ENCODE measurements at regions of chr9 and their contacts with region 1.

Region 1: DNA sequence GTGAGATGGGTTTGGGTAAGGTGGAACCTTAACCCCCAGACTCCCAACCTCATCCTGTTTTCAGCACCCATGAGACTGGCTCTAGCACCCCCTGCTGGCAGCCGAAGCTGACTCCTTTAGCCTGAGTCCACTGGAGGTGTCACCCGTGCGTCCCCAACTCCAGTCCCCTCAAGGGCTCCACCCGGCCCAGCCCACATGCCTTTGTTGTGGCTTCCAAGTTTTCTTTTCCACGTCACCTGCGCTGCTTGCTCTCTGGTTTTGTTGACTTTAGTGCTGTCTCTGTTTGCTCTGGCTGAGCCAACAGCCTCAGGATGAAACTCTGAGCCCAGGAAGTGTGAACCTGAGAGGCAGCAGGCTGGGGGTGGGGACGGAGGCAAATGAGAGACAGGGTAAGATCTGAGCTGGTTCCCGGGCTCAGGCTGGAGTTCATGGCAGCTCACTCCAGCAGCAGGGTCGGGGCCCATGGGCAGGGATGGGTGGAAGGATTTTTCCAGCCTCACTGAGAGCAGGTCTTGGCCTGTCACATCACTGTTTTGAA is 13.2 kb upstream of the AQP7 start:
- DNase-seq: peak; percentile 89 to 98
- ATAC-seq: peak; percentile 91 to 92
- H3K4me3 ChIP-seq: no peak overlapping the region
- H3K27ac ChIP-seq: peak overlapping the region; percentile 77 to 87
- H3K4me1 ChIP-seq: peaks cover 46% of the 10 kb centered on the region
- CTCF ChIP-seq: peak; percentile 91
- EP300 ChIP-seq: peak; percentile 83 to 91; a peak in 4 of 5 replicates
- POLR2A ChIP-seq: no peak
- RAD21 ChIP-seq: peak; percentile 66 to 83

Region 2: GRCh38 chr9:33404788-33405362 is 10.7 kb before region 1 on chr9:
- CTCF ChIA-PET with region 1: interaction called, 87 read pairs
- POLR2A ChIA-PET with region 1: interaction called, 3 read pairs
- DNase-seq: no peak
- ATAC-seq: peak; percentile 42 to 67; a peak in 3 of 6 replicates
- H3K4me3 ChIP-seq: no peak overlapping the region
- H3K27ac ChIP-seq: peak overlapping the region; percentile 27 to 49; a peak in 4 of 6 replicates
- H3K4me1 ChIP-seq: peaks cover 30% of the 10 kb centered on the region
- CTCF ChIP-seq: no peak
- EP300 ChIP-seq: no peak
- POLR2A ChIP-seq: no peak
- RAD21 ChIP-seq: no peak

Region 3: GRCh38 chr9:33436440-33436839 is 20.9 kb after region 1 on chr9:
- CTCF ChIA-PET with region 1: interaction called, 38 read pairs
- POLR2A ChIA-PET with region 1: no interaction called
- DNase-seq: no peak
- ATAC-seq: no peak; a peak in 2 of 6 replicates
- H3K4me3 ChIP-seq: no peak overlapping the region
- H3K27ac ChIP-seq: peak overlapping the region; percentile 2 to 12; a peak in 4 of 6 replicates
- H3K4me1 ChIP-seq: peaks cover 40% of the 10 kb centered on the region
- CTCF ChIP-seq: no peak
- EP300 ChIP-seq: no peak
- POLR2A ChIP-seq: no peak
- RAD21 ChIP-seq: no peak

Region 4: GRCh38 chr9:33452828-33453271 is 37.3 kb after region 1 on chr9:
- CTCF ChIA-PET with region 1: interaction called, 177 read pairs
- POLR2A ChIA-PET with region 1: no interaction called
- DNase-seq: peak; percentile 80 to 88
- ATAC-seq: peak; percentile 88 to 92
- H3K4me3 ChIP-seq: no peak overlapping the region
- H3K27ac ChIP-seq: peak overlapping the region; percentile 60 to 83
- H3K4me1 ChIP-seq: peaks cover 23% of the 10 kb centered on the region
- CTCF ChIP-seq: peak; percentile 87
- EP300 ChIP-seq: no peak
- POLR2A ChIP-seq: no peak
- RAD21 ChIP-seq: peak; percentile 79 to 82

Region 5: DNA sequence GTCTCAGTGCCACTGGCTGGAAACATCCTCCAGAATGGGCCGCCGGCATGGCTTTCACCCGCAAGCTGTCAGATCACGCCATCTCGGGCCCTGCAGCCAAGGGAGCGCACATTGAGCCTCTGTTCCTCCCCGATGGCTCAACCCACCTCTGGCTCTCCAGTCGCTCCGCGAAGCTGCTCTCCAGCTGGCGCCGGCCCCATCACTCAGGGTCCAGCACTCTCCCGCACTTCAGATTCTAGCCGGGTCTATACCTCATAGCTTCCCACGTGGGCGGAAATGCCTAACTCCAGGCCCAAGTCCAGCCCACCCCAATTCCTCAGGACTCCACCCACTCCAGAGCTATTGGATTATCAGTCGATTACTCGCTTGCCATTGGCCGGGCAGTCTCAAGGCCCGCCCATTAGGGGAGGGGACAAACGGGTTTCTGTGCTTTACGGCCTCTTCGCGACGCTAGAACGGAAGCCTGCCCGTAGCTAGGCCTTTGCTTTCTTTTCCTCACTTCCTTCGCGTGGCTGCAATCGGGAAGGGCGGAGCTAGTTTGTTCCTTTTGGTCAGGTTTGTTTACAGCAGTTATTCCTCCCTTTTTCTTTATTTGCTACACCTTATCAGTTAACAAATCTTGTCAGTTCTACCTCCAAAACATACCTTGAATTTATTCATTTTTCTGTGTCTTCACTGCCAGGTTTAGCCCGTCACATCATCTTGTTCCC is 58.2 kb after region 1 on chr9 and contains the start of gene NOL6:
- CTCF ChIA-PET with region 1: interaction called, 177 read pairs
- POLR2A ChIA-PET with region 1: interaction called, 5 read pairs
- DNase-seq: peak; percentile 97 to 99
- ATAC-seq: peak; percentile 99 to 100
- H3K4me3 ChIP-seq: peak within 1 kb of the TSS; percentile 88
- H3K27ac ChIP-seq: peak within 1 kb of the TSS; percentile 75 to 88
- H3K4me1 ChIP-seq: peaks cover 14% of the 10 kb centered on the region
- CTCF ChIP-seq: no peak
- EP300 ChIP-seq: no peak
- POLR2A ChIP-seq: peak; percentile 70
- RAD21 ChIP-seq: no peak
- polyA plus RNA-seq, gene NOL6: 49.5 and 56.6 TPM in 2 replicates